IMR-90 (cell line): ENCODE measurements at regions of chr10 and their contacts with region 1.

Region 1: GRCh38 chr10:122267849-122268737 is 3.0 kb upstream of the BTBD16 start:
- DNase-seq: peak; percentile 25
- ATAC-seq: peak; percentile 80
- H3K4me3 ChIP-seq: no peak overlapping the region
- H3K27ac ChIP-seq: no peak overlapping the region
- H3K4me1 ChIP-seq: peaks cover 12% of the 10 kb centered on the region
- H3K27me3 ChIP-seq: no peaks in the 10 kb centered on the region
- CTCF ChIP-seq: peak; percentile 80
- POLR2A ChIP-seq: no peak
- RAD21 ChIP-seq: peak; percentile 56

Region 2: GRCh38 chr10:121927841-121928527 is 340.1 kb before region 1 on chr10 and contains the start of gene ATE1:
- CTCF ChIA-PET with region 1: no interaction called
- POLR2A ChIA-PET with region 1: no interaction called
- dilution Hi-C with region 1: no loop called
- in situ Hi-C with region 1: no loop called
- intact Hi-C with region 1: loop called (anchors 10 kb)
- DNase-seq: peak; percentile 88
- ATAC-seq: peak; percentile 95
- H3K4me3 ChIP-seq: peak within 1 kb of the TSS; percentile 91
- H3K27ac ChIP-seq: peak within 1 kb of the TSS; percentile 98
- H3K4me1 ChIP-seq: no peaks in the 10 kb centered on the region
- H3K27me3 ChIP-seq: no peaks in the 10 kb centered on the region
- CTCF ChIP-seq: no peak; the same call in 1 of the 2 replicates
- POLR2A ChIP-seq: peak; percentile 85
- RAD21 ChIP-seq: no peak
- total RNA-seq, gene ATE1: 21.9 and 27.8 TPM in 2 replicates

Region 3: DNA sequence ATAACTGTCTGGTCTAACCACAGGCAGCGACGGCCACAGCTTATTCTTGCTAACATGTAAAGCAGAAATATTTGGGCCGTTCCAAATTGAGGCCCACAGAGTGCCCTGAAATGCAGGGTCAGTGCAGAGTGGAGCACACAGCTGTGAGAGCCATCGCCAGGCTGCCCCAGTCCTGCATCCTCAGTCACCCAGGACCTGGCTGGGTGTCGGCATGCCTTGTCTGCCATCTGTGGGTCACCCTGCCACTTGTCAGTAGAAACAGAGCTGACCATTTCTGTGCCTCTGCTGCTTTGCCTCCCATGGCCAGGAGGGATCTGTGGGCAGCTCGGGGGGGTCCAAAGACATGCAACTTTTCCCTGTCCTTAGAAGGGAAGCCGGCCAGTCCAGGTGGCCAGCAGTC is 54.3 kb before region 1 on chr10:
- CTCF ChIA-PET with region 1: interaction called, 13 read pairs
- POLR2A ChIA-PET with region 1: no interaction called
- dilution Hi-C with region 1: no loop called
- in situ Hi-C with region 1: no loop called
- intact Hi-C with region 1: no loop called
- DNase-seq: no peak
- ATAC-seq: no peak; the same call in 1 of the 2 replicates
- H3K4me3 ChIP-seq: no peak overlapping the region
- H3K27ac ChIP-seq: no peak overlapping the region
- H3K4me1 ChIP-seq: no peaks in the 10 kb centered on the region; the same call in 1 of the 2 replicates
- H3K27me3 ChIP-seq: no peaks in the 10 kb centered on the region
- CTCF ChIP-seq: no peak
- POLR2A ChIP-seq: no peak
- RAD21 ChIP-seq: no peak

Region 4: GRCh38 chr10:122279725-122280141 is 11.6 kb after region 1 on chr10:
- CTCF ChIA-PET with region 1: interaction called, 10 read pairs
- POLR2A ChIA-PET with region 1: no interaction called
- dilution Hi-C with region 1: no loop called
- in situ Hi-C with region 1: no loop called
- intact Hi-C with region 1: no loop called
- DNase-seq: peak; percentile 28
- ATAC-seq: no peak
- H3K4me3 ChIP-seq: no peak overlapping the region
- H3K27ac ChIP-seq: no peak overlapping the region
- H3K4me1 ChIP-seq: peaks cover 7% of the 10 kb centered on the region
- H3K27me3 ChIP-seq: no peaks in the 10 kb centered on the region
- CTCF ChIP-seq: peak; percentile 52
- POLR2A ChIP-seq: no peak
- RAD21 ChIP-seq: peak; percentile 47